Ascending aorta (tissue), 2 donors: ENCODE measurements at regions of chr3 and their contacts with region 1.

Region 1: GRCh38 chr3:126357295-126358037 is at the start of gene KLF15:
- DNase-seq: peak; percentile 38 to 95
- H3K4me3 ChIP-seq: peak within 1 kb of the TSS; percentile 91 to 97
- H3K27ac ChIP-seq: peak within 1 kb of the TSS; percentile 98 to 99
- H3K4me1 ChIP-seq: peaks cover 8 to 35% of the 10 kb centered on the region in 2 donors
- H3K27me3 ChIP-seq: no peaks in the 10 kb centered on the region
- CTCF ChIP-seq: no peak
- total RNA-seq, gene KLF15: 74.0 TPM

Region 2: GRCh38 chr3:125916376-125916978 is 441.0 kb before region 1 on chr3:
- intact Hi-C with region 1: loop called (anchors 10 kb)
- DNase-seq: no peak
- H3K4me3 ChIP-seq: peak overlapping the region; percentile 90 to 91
- H3K27ac ChIP-seq: peak overlapping the region; percentile 61 to 67
- H3K4me1 ChIP-seq: peaks cover 0 to 6% of the 10 kb centered on the region in 2 donors
- H3K27me3 ChIP-seq: no peaks in the 10 kb centered on the region
- CTCF ChIP-seq: peak in 1 of 3 experiments; percentile 35

Region 3: GRCh38 chr3:126212602-126213378 is 144.7 kb before region 1 on chr3:
- intact Hi-C with region 1: loop called (anchors 2 kb)
- DNase-seq: peak in 1 of 2 donors; percentile 77
- H3K4me3 ChIP-seq: peak overlapping the region; percentile 41 to 69
- H3K27ac ChIP-seq: peak overlapping the region; percentile 86 to 89
- H3K4me1 ChIP-seq: peaks cover 9 to 33% of the 10 kb centered on the region in 2 donors
- H3K27me3 ChIP-seq: no peaks in the 10 kb centered on the region
- CTCF ChIP-seq: peak; percentile 43 to 70 (median 68)

Region 4: GRCh38 chr3:126267226-126267975 is 90.1 kb before region 1 on chr3:
- intact Hi-C with region 1: loop called (anchors 1 kb)
- DNase-seq: peak; percentile 32 to 96
- H3K4me3 ChIP-seq: peak overlapping the region; percentile 34 to 50
- H3K27ac ChIP-seq: peak overlapping the region; percentile 92 to 99
- H3K4me1 ChIP-seq: peaks cover 20 to 56% of the 10 kb centered on the region in 2 donors
- H3K27me3 ChIP-seq: no peaks in the 10 kb centered on the region
- CTCF ChIP-seq: peak in 2 of 3 experiments; percentile 31 to 38

Region 5: DNA sequence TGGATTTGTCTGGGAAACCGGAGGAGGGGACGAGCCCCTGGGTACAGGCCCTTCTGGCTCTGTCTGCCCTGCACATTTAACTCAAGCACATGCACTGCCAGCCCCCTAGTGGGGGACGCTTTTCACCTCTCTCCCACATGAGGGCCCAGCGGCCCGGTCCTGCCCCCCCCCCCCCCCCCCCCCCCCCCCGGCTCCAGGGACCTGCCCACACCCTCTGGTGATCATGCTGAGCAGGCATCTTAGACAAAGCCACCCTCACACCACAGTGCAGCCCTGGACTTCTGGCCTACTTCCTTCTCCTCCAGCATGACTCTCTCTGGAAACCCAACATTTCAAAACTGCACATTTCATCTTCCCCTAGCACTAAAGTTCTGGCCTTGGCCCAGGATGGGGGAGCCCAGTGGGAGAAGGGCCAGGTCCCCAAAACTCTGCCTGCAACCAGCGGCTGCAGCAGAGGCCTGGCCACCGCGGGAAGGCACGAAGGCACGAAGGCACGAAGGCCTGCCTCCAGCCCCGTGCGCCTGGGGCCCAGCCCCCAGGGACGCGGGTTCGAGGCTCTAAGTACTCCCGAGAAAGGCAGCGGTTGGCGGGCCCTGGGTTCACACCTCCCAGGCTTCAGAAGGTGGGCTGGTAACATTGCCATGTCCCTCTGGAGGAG is 14.3 kb before region 1 on chr3:
- intact Hi-C with region 1: loop called (anchors 2 kb)
- DNase-seq: peak in 1 of 2 donors; percentile 55
- H3K4me3 ChIP-seq: no peak overlapping the region
- H3K27ac ChIP-seq: peak overlapping the region; percentile 32 to 51
- H3K4me1 ChIP-seq: peaks cover 4 to 30% of the 10 kb centered on the region in 2 donors
- H3K27me3 ChIP-seq: no peaks in the 10 kb centered on the region
- CTCF ChIP-seq: no peak

Region 6: GRCh38 chr3:126399351-126399735 is 41.9 kb after region 1 on chr3:
- intact Hi-C with region 1: no loop called
- DNase-seq: no peak
- H3K4me3 ChIP-seq: no peak overlapping the region
- H3K27ac ChIP-seq: no peak overlapping the region
- H3K4me1 ChIP-seq: no peaks in the 10 kb centered on the region
- H3K27me3 ChIP-seq: no peaks in the 10 kb centered on the region
- CTCF ChIP-seq: no peak

Region 7: DNA sequence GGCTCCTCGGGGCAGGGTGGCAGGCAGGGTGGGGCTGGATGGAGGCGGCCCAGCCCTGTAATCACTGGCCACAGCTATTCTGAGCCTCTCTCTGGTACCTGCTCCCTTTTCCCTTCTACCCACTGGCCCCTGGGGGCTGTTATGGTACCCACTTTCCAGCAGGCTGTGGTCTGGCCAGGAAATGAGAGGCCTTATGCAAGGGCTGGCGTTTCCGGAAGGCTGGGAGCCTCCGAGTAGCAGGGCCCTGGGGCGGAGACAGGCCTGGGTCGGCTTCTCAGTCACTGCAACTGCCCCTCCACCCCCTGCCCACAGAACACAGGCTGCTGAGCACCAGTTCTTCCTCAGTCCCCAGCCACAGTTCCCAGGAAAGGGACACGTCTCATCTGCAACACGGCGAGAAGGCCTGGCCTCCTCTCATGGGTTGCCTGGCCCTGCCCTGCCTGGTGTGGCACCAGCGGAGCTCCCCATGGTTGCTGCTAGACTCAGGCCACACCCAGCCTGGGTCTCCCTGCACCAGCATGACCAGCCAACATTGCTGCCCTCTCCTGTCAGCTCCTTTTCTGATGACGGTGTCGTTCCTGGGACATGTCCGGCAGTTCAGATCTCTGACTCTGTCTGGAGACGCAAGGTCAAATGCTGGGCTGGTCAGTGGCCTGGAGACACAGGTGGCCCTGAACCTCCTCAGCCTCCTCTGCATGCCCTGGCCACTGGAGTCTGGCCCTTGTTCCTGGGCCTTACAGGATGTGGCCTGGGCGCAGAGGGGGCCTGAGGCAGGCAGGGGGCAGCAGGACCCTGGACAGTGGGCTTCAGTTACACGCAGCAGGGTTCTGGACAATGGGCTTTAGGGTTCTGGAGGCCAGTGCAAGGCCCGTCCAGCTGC is 172.9 kb after region 1 on chr3:
- intact Hi-C with region 1: no loop called
- DNase-seq: peak in 1 of 2 donors; percentile 74
- H3K4me3 ChIP-seq: no peak overlapping the region
- H3K27ac ChIP-seq: no peak overlapping the region
- H3K4me1 ChIP-seq: no peaks in the 10 kb centered on the region
- H3K27me3 ChIP-seq: no peaks in the 10 kb centered on the region
- CTCF ChIP-seq: no peak

Region 8: DNA sequence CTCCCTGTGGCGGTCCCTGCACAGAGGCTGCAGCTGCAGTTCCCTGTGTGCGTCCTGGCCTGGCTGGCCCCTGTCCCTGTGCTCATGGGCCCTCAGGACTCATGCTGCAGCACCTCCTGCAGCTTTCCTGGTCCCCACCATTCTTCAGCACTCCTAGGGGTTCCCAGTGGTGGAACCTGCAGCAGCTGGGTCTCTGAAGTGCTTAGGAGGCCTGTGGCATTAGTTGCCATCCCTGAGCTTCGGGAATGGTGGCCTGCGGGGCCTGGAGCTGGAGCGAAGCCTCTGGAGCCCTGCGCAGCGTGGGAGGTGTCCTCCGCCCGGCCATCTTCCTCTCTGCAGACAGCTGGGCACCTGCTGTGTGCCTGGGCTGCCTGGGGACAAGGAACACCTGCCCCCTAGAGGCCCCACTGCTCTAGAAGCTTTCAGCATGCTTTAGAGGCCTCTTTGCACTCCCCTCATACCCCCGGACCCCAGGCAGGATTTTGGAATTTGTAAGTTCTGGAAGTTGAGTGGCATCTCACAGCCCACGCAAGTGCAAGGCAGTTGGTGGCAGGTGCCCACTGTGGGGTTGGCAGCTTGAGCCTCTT is 638.6 kb after region 1 on chr3:
- intact Hi-C with region 1: no loop called
- DNase-seq: no peak
- H3K4me3 ChIP-seq: no peak overlapping the region
- H3K27ac ChIP-seq: peak overlapping the region; percentile 86 to 91
- H3K4me1 ChIP-seq: peaks cover 51 to 89% of the 10 kb centered on the region in 2 donors
- H3K27me3 ChIP-seq: no peaks in the 10 kb centered on the region
- CTCF ChIP-seq: no peak